ENCODE measurements at regions of chr5 and their contacts with region 1.

Region 1: GRCh38 chr5:113678924-113679575 is 165.6 kb downstream of the YTHDC2 start:
- DNase-seq: peak; percentile 70
- H3K4me3 Mint-ChIP-seq: no peak overlapping the region
- H3K27ac Mint-ChIP-seq: no peak overlapping the region
- H3K4me1 Mint-ChIP-seq: no peaks in the 10 kb centered on the region
- H3K27me3 Mint-ChIP-seq: no peaks in the 10 kb centered on the region
- CTCF ChIP-seq: peak; percentile 71

Region 2: DNA sequence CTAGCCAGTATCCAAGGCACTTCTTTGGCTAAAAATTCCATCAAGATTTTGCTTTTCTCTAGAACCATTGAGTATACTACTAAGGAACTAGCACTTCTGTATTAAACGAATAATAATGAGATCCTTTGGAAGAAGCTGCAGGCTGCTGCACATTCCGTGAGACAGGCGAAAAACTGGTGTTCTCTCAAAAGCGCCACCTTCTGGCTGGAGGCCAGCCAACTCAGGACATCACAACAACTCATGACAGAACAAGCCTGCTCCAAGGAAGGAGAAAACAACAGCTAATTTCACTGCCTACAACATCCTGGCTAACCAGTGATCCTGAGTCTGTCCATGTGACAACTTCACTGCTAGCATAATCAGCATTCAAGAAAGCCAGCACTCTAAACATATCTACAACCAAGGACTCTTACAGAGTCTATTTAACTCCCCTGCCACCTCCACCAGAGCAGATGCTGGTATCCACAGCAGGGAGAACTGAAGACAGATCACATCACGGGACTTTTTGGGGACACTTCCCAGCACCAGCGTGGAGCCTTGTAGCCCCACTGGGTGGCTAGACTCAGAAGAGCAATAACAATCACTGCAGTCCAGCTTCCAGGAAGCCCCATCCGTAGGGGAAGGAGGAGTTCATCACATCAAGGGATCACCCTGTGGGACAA is 15.0 kb before region 1 on chr5:
- CTCF ChIA-PET with region 1: interaction called, 10 read pairs
- POLR2A ChIA-PET with region 1: no interaction called
- intact Hi-C with region 1: no loop called
- DNase-seq: peak; percentile 79
- H3K4me3 Mint-ChIP-seq: no peak overlapping the region
- H3K27ac Mint-ChIP-seq: no peak overlapping the region
- H3K4me1 Mint-ChIP-seq: peaks cover 5% of the 10 kb centered on the region
- H3K27me3 Mint-ChIP-seq: peaks cover 76% of the 10 kb centered on the region
- CTCF ChIP-seq: peak; percentile 31

Region 3: DNA sequence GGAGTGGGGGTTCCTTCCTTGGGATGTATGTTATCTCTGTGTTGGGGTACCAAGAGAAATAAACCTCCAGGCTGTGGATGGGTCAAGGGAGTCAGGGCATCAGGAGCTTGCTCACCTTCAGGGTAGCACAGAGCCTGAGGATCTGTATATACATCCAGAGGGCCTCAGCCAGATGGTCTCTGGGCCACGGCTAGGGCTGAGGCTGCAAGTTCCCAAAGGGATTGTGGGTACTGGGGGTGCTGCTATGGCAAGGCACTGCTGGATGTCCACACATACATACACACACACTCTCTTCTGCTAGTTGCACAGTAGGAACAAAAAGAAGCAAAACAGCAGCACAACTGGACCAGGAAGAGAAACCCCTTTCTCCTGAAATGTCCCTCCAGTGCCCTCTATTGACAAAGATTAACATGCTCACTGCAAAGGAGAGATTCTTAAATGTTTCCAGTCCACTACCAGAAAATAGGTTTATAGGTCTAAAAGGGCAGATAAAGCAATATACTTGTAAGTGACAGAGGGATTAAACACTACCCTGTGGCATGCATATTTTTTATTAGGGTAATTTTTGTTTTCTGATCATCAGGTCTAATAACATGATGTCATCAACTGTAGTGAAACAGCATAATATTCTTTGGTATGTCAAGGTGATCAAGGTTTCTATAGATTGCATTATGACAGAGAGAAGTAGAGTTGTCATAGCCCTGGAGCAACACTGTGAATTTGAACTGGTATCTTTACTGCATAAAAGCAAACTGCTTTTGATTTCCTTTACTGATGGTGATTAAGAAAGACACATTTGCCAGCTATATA is 626.6 kb after region 1 on chr5:
- CTCF ChIA-PET with region 1: interaction called, 3 read pairs
- POLR2A ChIA-PET with region 1: no interaction called
- intact Hi-C with region 1: loop called (anchors 5 kb)
- DNase-seq: peak; percentile 29
- H3K4me3 Mint-ChIP-seq: no peak overlapping the region
- H3K27ac Mint-ChIP-seq: no peak overlapping the region
- H3K4me1 Mint-ChIP-seq: no peaks in the 10 kb centered on the region
- H3K27me3 Mint-ChIP-seq: peaks cover 52% of the 10 kb centered on the region
- CTCF ChIP-seq: peak; percentile 24

Region 4: DNA sequence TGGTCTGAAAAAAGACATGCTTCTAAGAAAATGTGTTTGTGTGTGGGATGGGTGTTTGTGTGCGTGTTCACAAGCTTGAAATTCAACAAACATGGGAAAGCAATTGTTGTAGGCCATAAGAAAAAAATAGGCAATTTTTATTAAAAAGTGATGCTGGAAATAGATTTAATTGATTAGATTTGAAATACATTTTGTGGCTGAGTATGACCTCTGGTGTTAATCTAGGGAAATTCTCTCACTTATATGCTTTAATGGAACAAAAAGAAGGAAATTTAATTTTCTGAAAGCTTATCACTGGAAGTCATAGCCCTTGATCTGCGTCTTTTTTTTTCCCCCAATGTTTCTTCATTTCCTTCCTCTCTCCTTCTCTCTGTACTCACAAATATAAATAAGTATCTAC is 679.3 kb after region 1 on chr5:
- CTCF ChIA-PET with region 1: no interaction called
- POLR2A ChIA-PET with region 1: no interaction called
- intact Hi-C with region 1: loop called (anchors 5 kb)
- DNase-seq: no peak
- H3K4me3 Mint-ChIP-seq: no peak overlapping the region
- H3K27ac Mint-ChIP-seq: no peak overlapping the region
- H3K4me1 Mint-ChIP-seq: no peaks in the 10 kb centered on the region
- H3K27me3 Mint-ChIP-seq: peaks cover 58% of the 10 kb centered on the region
- CTCF ChIP-seq: peak; percentile 11

Region 5: DNA sequence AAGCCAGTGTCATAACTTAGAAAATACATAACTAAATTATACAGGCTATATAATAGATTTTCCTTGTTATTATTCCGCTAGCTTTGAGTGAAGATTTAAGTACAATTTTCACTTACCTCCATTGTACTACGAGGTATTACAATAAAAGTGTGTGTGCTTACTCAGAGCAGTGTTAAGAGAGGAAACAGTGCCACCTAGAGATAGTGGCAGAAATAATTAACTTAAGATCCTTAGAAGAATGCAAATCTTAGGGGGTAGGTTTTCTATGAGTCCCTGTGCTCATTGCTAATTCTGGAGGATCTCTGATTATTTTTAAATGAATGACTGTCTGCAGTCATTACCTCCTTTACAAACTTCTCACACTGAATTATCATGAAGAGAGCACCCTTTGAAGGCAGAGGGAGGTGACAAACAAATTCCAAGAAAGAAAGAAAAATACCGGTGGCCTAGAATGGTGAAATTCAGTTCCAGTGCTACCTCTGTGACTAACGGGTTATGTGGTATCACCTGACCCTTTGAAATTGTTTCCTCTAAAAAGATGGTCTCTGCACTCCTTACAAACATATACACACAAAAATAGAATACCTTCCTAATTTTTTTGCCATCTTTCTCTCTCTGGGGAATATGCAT is 1110.8 kb after region 1 on chr5:
- CTCF ChIA-PET with region 1: interaction called, 3 read pairs
- POLR2A ChIA-PET with region 1: no interaction called
- intact Hi-C with region 1: loop called (anchors 2 kb)
- DNase-seq: peak; percentile 47
- H3K4me3 Mint-ChIP-seq: no peak overlapping the region
- H3K27ac Mint-ChIP-seq: no peak overlapping the region
- H3K4me1 Mint-ChIP-seq: no peaks in the 10 kb centered on the region
- H3K27me3 Mint-ChIP-seq: peaks cover 49% of the 10 kb centered on the region
- CTCF ChIP-seq: peak; percentile 40

Measured in MCF 10A (cell line).